Dorsolateral prefrontal cortex (tissue), 120 donors: ENCODE measurements at regions of chr12 and their contacts with region 1.

Region 1: DNA sequence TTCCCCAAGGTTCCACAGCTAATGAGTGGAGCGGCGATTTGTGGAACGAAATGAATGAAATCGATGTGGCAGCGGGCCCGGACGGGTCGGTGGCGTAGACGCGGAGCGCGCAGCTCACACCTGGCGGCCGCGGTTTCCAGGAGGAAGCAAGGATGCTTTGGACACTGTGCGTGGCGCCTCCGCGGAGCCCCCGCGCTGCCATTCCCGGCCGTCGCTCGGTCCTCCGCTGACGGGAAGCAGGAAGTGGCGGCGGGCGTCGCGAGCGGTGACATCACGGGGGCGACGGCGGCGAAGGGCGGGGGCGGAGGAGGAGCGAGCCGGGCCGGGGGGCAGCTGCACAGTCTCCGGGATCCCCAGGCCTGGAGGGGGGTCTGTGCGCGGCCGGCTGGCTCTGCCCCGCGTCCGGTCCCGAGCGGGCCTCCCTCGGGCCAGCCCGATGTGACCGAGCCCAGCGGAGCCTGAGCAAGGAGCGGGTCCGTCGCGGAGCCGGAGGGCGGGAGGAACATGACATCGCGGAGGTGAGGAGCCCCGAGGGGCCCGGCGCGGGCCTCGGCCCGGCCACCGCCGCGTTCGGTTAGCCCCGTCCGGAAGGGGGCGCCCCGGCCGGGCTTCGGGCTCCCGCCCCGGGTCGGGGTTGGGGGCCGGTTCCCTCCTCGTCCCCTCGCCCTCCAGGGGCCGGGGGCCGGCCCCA is at the start of gene PTPN11:
- DNase-seq: peak; percentile 79 to 96 (median 88)
- H3K4me3 ChIP-seq: peak within 1 kb of the TSS; percentile 65 to 100 (median 96)
- H3K27ac ChIP-seq: peak within 1 kb of the TSS; percentile 77 to 99 (median 96)
- H3K27me3 ChIP-seq: no peaks in the 10 kb centered on the region
- CTCF ChIP-seq: peak in 43 of 56 donors; percentile 8 to 65 (median 34)
- total RNA-seq, gene PTPN11: 141 to 247 (median 187) TPM

Region 2: GRCh38 chr12:111942557-111942956 is 476.2 kb before region 1 on chr12:
- intact Hi-C with region 1: loop called in 1 of 2 experiments (anchors 10 kb)
- DNase-seq: no peak
- H3K4me3 ChIP-seq: no peak overlapping the region
- H3K27ac ChIP-seq: no peak overlapping the region
- H3K27me3 ChIP-seq: no peaks in the 10 kb centered on the region
- CTCF ChIP-seq: no peak

Region 3: DNA sequence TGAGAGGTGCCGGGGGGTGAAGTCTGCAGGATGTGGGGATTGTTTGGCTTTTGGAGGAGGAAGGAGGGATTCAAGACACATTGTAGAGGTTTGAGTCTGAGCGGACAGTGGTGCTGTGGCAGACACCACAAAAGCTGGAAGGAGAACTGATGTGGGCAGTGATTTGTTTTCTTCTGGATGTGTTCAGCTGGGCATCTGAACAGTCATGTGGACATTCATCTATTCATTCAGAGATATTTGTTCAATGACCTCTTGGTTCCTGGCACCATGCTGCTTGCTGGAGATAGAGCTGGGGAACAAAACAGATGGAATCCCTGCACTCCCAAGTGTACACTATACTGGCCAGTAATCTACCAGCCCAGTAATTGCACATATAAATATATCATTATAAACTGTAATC is 64.0 kb after region 1 on chr12:
- intact Hi-C with region 1: loop called in 1 of 2 experiments (anchors 2 kb)
- DNase-seq: peak in 5 of 10 donors; percentile 11 to 68 (median 53)
- H3K4me3 ChIP-seq: peak overlapping the region in 3 of 59 donors; percentile 4 to 40 (median 18)
- H3K27ac ChIP-seq: peak overlapping the region in 57 of 59 donors; percentile 18 to 97 (median 86)
- H3K27me3 ChIP-seq: no peaks in the 10 kb centered on the region
- CTCF ChIP-seq: peak in 3 of 56 donors; percentile 15 to 25 (median 21)